ENCODE measurements at regions of chr12 and their contacts with region 1.

Region 1: GRCh38 chr12:49515266-49515665 is 23.6 kb upstream of the KCNH3 start:
- DNase-seq: no peak
- H3K4me3 ChIP-seq: no peak overlapping the region
- H3K27ac ChIP-seq: peak overlapping the region; percentile 43 to 67; a peak in 3 of 4 replicates
- H3K4me1 ChIP-seq: peaks cover 3 to 41% of the 10 kb centered on the region in 2 experiments; a peak in 3 of 4 replicates
- H3K27me3 ChIP-seq: no peaks in the 10 kb centered on the region
- CTCF ChIP-seq: no peak
- EP300 ChIP-seq: peak in 1 of 2 experiments; percentile 29; a peak in 1 of 4 replicates
- RAD21 ChIP-seq: no peak

Region 2: DNA sequence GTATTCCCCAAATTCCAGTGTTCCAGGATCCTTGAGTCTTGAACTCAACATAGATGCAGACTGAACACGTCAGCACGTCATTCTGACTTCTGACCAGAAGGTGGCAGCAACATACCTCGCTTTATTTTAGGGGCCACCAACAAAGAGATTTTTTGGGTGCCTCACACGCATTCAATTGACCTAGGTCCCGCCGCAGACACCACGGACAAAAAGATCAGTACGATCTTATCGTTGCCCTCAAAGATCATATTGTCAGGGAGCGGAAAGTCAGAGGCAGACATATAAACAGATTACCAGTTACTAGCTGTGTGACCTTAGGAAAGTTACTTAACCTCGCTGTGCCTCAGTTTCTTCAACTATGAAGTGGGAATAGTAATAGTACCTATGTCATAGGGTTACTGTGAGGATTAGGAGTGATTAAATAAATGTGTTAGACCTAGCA is 226.8 kb before region 1 on chr12:
- CTCF ChIA-PET with region 1: interaction called, 16 read pairs
- POLR2A ChIA-PET with region 1: no interaction called
- DNase-seq: peak; percentile 76
- H3K4me3 ChIP-seq: no peak overlapping the region; a peak in 1 of 4 replicates
- H3K27ac ChIP-seq: no peak overlapping the region
- H3K4me1 ChIP-seq: peaks cover 6 to 18% of the 10 kb centered on the region in 2 experiments; a peak in 3 of 4 replicates
- H3K27me3 ChIP-seq: no peaks in the 10 kb centered on the region
- CTCF ChIP-seq: peak; percentile 92
- EP300 ChIP-seq: no peak
- RAD21 ChIP-seq: peak; percentile 87

Region 3: DNA sequence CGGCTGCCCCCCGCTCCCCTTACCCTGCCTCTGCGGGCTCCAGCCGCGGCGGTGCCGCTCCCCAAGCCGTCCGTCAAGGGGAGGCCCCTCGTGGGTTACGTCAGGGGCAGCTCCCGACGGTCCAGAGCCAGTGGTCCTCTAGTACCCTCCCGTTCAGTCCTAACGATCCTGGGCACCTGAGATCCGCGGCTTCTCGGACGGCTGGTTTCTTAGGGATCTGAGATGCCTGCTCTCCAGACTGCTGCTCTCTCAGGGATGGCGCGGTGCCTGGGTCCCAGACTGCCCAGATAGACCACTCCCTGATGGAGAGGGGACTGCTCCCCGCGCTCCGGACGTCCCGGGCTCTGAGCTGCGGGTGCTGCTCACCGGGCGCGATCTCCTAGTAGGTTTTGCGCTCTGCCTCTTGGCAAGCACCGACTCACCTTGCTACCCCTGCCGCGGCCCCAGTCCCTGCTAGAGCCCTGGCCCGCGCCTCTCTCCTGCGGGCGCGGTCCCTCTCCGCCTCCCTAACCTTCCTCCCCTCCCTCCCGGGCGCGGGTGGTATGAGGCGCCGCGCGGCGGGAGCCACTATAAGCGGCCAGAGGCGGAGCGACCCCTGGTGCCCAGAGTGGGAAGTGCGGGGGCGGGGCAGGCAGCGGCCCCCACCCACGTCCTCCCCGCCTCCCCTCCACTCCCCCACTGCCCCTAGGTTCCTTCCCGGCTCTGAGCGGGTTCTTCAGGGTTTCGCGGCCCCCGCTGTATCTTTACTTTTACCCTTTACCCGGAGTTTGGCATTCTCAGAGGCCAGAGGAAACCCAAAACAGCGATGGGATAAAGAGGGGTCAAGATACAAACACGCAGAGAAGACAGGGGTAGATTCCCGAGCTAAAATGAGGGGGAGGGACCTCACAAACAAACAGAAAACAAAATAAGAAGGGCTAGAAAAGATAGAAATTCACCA is 178.4 kb before region 1 on chr12 and contains the start of gene C1QL4:
- CTCF ChIA-PET with region 1: interaction called, 12 read pairs
- POLR2A ChIA-PET with region 1: no interaction called
- DNase-seq: peak; percentile 99
- H3K4me3 ChIP-seq: peak within 1 kb of the TSS; percentile 69 to 97
- H3K27ac ChIP-seq: no peak within 1 kb of the TSS
- H3K4me1 ChIP-seq: peaks cover 0 to 9% of the 10 kb centered on the region in 2 experiments; a peak in 1 of 4 replicates
- H3K27me3 ChIP-seq: no peaks in the 10 kb centered on the region
- CTCF ChIP-seq: peak; percentile 84
- EP300 ChIP-seq: no peak
- RAD21 ChIP-seq: peak; percentile 52
- polyA plus RNA-seq, gene C1QL4: 9.8 and 14.6 TPM in 2 replicates

Region 4: GRCh38 chr12:49482095-49483051 is 32.9 kb before region 1 on chr12:
- CTCF ChIA-PET with region 1: interaction called, 13 read pairs
- POLR2A ChIA-PET with region 1: no interaction called
- DNase-seq: no peak
- H3K4me3 ChIP-seq: no peak overlapping the region
- H3K27ac ChIP-seq: peak overlapping the region in 1 of 2 experiments; percentile 46; a peak in 2 of 4 replicates
- H3K4me1 ChIP-seq: peaks cover 3 to 29% of the 10 kb centered on the region in 2 experiments; a peak in 3 of 4 replicates
- H3K27me3 ChIP-seq: no peaks in the 10 kb centered on the region
- CTCF ChIP-seq: no peak
- EP300 ChIP-seq: no peak
- RAD21 ChIP-seq: no peak

Region 5: DNA sequence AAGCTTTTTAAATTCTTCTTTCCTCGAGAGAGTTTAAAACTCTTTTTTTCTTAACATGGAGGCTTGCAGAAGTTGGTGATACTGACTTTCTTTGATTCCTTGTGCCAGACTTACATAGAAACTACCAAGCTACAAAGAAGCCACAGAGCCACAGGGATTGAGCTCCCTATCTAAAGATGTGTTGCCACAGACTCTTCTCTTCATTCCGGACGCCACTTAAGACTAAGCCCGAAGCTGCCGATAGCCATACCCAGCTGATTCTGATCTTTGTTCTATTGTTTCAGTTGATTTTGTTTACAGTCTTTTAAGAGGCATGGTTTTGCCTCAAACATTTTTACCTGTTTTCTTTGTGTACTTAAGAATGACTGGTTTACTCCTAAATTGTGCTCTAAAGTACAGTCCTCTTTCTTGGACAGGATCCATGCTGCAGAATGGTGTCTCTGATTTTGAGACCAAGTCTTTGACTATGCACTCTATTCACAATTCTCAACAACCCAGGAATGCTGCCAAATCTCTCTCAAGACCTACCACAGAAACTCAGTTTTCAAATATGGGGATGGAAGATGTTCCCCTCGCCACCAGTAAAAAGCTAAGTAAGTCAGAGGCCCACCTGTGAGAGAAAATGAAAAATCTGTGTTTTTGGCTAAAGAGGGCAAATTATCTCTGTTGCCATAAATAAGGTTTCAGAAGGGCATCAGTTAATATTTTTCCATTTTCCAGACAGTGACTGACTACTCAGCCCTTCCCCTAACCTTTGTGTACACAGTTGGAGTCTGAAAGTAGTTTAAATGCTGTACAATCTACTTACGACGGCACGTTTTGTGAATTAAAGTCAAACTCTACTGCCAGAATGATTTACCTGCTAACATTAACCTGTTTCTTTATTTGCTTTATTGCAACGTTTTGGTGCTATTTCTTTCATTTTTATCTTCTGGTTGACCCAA is 18.6 kb before region 1 on chr12:
- CTCF ChIA-PET with region 1: interaction called, 21 read pairs
- POLR2A ChIA-PET with region 1: no interaction called
- DNase-seq: no peak
- H3K4me3 ChIP-seq: no peak overlapping the region
- H3K27ac ChIP-seq: no peak overlapping the region
- H3K4me1 ChIP-seq: peaks cover 0 to 12% of the 10 kb centered on the region in 2 experiments; a peak in 2 of 4 replicates
- H3K27me3 ChIP-seq: no peaks in the 10 kb centered on the region
- CTCF ChIP-seq: no peak
- EP300 ChIP-seq: no peak
- RAD21 ChIP-seq: no peak

Region 6: DNA sequence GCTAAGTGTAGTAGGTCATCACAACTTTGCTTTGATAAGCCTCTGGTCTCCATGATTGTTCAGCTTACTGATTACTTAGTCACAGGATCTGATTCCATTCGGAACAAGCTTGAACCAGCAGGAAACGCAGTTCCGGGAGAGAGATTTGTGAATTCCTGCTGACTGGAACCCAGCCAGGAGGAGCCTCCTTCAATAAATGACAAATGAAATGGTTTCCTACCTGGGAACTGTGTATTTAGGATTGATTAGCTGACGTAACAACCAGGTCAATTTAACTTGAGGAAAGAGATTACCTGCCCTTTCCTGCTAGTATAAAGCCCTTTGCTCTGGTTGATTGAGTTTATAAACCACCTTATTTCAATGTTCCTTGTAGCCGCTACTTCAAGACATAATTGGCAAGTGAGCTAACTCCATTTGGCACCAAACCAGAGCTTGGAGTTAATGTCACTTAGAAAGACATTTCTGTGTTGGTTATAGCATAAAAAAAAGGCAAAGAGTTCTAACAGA is 11.5 kb before region 1 on chr12:
- CTCF ChIA-PET with region 1: interaction called, 21 read pairs
- POLR2A ChIA-PET with region 1: interaction called, 4 read pairs
- DNase-seq: no peak
- H3K4me3 ChIP-seq: no peak overlapping the region
- H3K27ac ChIP-seq: peak overlapping the region; percentile 68 to 90; a peak in 3 of 4 replicates
- H3K4me1 ChIP-seq: peaks cover 0 to 57% of the 10 kb centered on the region in 2 experiments; a peak in 2 of 4 replicates
- H3K27me3 ChIP-seq: no peaks in the 10 kb centered on the region
- CTCF ChIP-seq: no peak
- EP300 ChIP-seq: peak in 1 of 2 experiments; percentile 79; a peak in 2 of 4 replicates
- RAD21 ChIP-seq: no peak

Region 7: GRCh38 chr12:49580572-49581535 is 65.6 kb after region 1 on chr12:
- CTCF ChIA-PET with region 1: interaction called, 22 read pairs
- POLR2A ChIA-PET with region 1: no interaction called
- DNase-seq: peak; percentile 83
- H3K4me3 ChIP-seq: no peak overlapping the region; a peak in 1 of 4 replicates
- H3K27ac ChIP-seq: no peak overlapping the region; a peak in 1 of 4 replicates
- H3K4me1 ChIP-seq: peaks cover 0 to 18% of the 10 kb centered on the region in 2 experiments; a peak in 1 of 4 replicates
- H3K27me3 ChIP-seq: no peaks in the 10 kb centered on the region
- CTCF ChIP-seq: peak; percentile 88
- EP300 ChIP-seq: no peak; a peak in 1 of 4 replicates
- RAD21 ChIP-seq: peak; percentile 82